Common myeloid progenitor, CD34-positive (primary cell): ENCODE measurements at regions of chr12 and their contacts with region 1.

Region 1: GRCh38 chr12:85866986-85867776 is 6.9 kb upstream of the NTS start:
- DNase-seq: peak; percentile 78 to 89 (median 87)
- H3K4me3 ChIP-seq: peak overlapping the region in 3 of 7 experiments; percentile 14 to 53 (median 20)
- H3K27ac ChIP-seq: no peak overlapping the region
- H3K4me1 ChIP-seq: peaks cover 0 to 3% (median 0%) of the 10 kb centered on the region in 4 experiments
- H3K27me3 ChIP-seq: no peaks in the 10 kb centered on the region

Region 2: GRCh38 chr12:85476756-85477155 is 390.4 kb before region 1 on chr12:
- CTCF ChIA-PET with region 1: interaction called, 15 read pairs
- POLR2A ChIA-PET with region 1: interaction called, 3 read pairs
- DNase-seq: no peak
- H3K4me3 ChIP-seq: no peak overlapping the region
- H3K27ac ChIP-seq: no peak overlapping the region
- H3K4me1 ChIP-seq: no peaks in the 10 kb centered on the region
- H3K27me3 ChIP-seq: no peaks in the 10 kb centered on the region

Region 3: DNA sequence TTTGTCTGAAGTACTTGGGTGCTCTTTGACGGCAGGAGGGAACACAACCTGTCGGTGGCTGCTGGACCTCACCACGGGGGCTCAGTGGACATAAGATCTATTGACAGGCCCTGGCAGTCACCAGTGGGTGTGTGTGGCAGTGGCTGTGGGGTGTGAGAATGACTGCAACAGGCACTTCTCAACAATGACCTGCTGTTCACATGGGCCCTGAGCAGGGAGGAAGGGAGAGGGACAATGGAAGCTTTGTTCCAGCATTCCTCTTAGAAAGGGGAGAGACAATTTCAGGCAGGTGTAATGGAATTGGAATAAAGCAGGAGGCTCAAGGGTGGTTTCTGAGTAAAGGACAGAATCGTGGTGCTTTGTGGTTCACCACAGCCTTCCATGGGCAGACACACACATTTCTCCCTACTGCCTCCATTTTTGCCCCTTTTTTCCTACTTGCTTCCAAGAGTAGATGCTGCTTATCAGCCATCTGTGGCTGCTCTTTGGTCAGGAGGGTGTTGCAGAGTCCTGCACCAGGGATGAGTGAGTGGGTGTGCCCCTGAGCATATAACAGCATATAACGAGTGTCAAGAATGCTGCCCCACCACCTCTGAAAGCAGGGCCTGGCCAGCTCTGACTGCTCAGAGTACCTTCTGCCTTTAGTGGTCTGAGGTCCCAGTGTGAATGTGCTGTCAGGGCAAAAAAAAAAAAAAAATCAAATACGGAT is 298.6 kb before region 1 on chr12:
- CTCF ChIA-PET with region 1: interaction called, 15 read pairs
- POLR2A ChIA-PET with region 1: no interaction called
- DNase-seq: no peak
- H3K4me3 ChIP-seq: no peak overlapping the region
- H3K27ac ChIP-seq: no peak overlapping the region
- H3K4me1 ChIP-seq: no peaks in the 10 kb centered on the region
- H3K27me3 ChIP-seq: no peaks in the 10 kb centered on the region

Region 4: GRCh38 chr12:85836197-85837090 is 30.7 kb before region 1 on chr12 and contains the start of gene RASSF9:
- CTCF ChIA-PET with region 1: interaction called, 10 read pairs
- POLR2A ChIA-PET with region 1: no interaction called
- DNase-seq: peak; percentile 12 to 38 (median 19)
- H3K4me3 ChIP-seq: peak within 1 kb of the TSS in 4 of 7 experiments; percentile 65 to 88 (median 72)
- H3K27ac ChIP-seq: peak within 1 kb of the TSS in 1 of 2 experiments; percentile 59
- H3K4me1 ChIP-seq: peaks cover 0 to 20% (median 3%) of the 10 kb centered on the region in 4 experiments
- H3K27me3 ChIP-seq: no peaks in the 10 kb centered on the region